Gastrocnemius medialis (tissue), 4 donors: ENCODE measurements at regions of chr12 and their contacts with region 1.

Region 1: GRCh38 chr12:108241986-108242703 is 97.0 kb downstream of the CMKLR1 start:
- DNase-seq: no peak
- ATAC-seq: no peak
- H3K4me3 ChIP-seq: no peak overlapping the region
- H3K27ac ChIP-seq: no peak overlapping the region
- H3K4me1 ChIP-seq: no peaks in the 10 kb centered on the region
- H3K27me3 ChIP-seq: peaks cover 0 to 4% (median 0%) of the 10 kb centered on the region in 3 donors
- CTCF ChIP-seq: no peak
- POLR2A ChIP-seq: no peak

Region 2: DNA sequence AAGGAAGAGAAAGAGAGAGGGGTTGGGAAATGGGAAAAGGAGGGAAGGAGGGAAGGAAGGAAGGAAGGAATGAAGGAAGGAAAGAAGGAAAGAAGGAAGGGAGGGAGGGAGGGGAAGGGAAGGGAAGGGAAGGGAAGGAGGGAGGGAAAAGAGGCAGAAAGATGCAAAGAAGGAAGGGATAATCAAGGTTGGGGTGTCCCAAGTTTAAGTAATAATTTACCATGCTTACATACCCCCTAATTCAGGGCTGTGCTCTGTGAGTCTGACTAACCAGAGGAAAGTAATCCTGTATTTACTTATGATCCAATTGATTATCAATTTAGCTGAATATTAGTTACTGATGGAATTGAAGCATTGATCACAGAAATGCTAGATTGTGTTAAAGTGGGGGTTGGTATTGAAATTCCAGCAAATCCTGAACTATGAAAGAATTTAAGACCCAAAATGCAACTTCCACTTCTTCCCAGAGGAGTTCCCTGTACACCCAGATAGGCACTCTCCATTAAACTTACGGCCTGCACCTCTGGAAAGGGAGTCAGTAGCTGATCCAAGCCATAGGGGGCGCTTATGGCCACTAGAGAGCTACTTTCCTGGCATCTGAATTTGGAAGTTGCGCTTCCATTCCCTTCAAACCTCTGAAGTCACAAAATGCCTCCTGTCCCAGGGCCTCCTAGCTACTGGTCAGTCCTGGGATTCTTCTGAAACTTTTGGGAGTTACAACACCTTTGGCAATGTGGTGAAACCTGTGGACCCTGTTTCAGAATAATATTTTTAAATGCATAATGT is 719.3 kb before region 1 on chr12:
- in situ Hi-C with region 1: no loop called
- intact Hi-C with region 1: no loop called
- DNase-seq: no peak
- ATAC-seq: no peak
- H3K4me3 ChIP-seq: no peak overlapping the region
- H3K27ac ChIP-seq: no peak overlapping the region
- H3K4me1 ChIP-seq: no peaks in the 10 kb centered on the region
- H3K27me3 ChIP-seq: no peaks in the 10 kb centered on the region
- CTCF ChIP-seq: no peak
- POLR2A ChIP-seq: no peak

Region 3: DNA sequence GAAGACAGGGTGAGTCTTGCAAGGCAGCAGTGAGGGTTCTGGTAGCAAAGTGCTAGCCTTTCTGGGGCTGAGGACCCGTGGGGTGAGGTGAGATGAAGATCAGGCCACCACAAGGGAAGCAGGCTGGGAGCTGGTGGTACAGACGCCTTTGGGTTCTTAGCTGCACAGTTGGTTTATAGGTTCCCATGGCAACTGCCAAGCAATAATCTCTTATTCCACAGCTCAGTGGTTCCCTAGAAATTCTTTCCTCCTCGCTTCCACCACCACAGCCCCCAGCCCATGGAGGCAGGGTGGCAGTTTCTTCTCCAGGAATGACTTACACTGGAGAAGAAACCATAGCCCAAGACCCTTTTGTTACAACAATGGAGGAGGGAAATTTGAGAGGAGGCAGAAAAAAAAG is 14.9 kb after region 1 on chr12:
- in situ Hi-C with region 1: no loop called
- intact Hi-C with region 1: loop called (anchors 1 kb)
- DNase-seq: no peak
- ATAC-seq: no peak
- H3K4me3 ChIP-seq: no peak overlapping the region
- H3K27ac ChIP-seq: no peak overlapping the region
- H3K4me1 ChIP-seq: no peaks in the 10 kb centered on the region
- H3K27me3 ChIP-seq: peaks cover 0 to under 1% (median 0%) of the 10 kb centered on the region in 3 donors
- CTCF ChIP-seq: no peak
- POLR2A ChIP-seq: no peak